ENCODE measurements at regions of chr20 and their contacts with region 1.

Region 1: GRCh38 chr20:50189681-50190582 is 698 bp upstream of the CEBPB start:
- DNase-seq: peak; percentile 90
- ATAC-seq: peak; percentile 53
- H3K4me3 ChIP-seq: peak overlapping the region; percentile 80 to 99 (median 95)
- H3K27ac ChIP-seq: peak overlapping the region; percentile 79
- H3K4me1 ChIP-seq: peaks cover 66% of the 10 kb centered on the region
- H3K27me3 ChIP-seq: no peaks in the 10 kb centered on the region; a peak in 1 of 5 replicates
- CTCF ChIP-seq: peak; percentile 96
- EP300 ChIP-seq: peak in 1 of 2 experiments; percentile 31; a peak in 1 of 4 replicates
- POLR2A ChIP-seq: no peak
- RAD21 ChIP-seq: peak; percentile 96

Region 2: GRCh38 chr20:50115591-50116372 is 74.2 kb before region 1 on chr20:
- CTCF ChIA-PET with region 1: no interaction called
- POLR2A ChIA-PET with region 1: interaction called, 35 read pairs
- in situ Hi-C with region 1: no loop called
- intact Hi-C with region 1: no loop called
- DNase-seq: peak; percentile 96
- ATAC-seq: peak; percentile 82
- H3K4me3 ChIP-seq: peak overlapping the region; percentile 65 to 94 (median 78)
- H3K27ac ChIP-seq: peak overlapping the region; percentile 40
- H3K4me1 ChIP-seq: peaks cover 56% of the 10 kb centered on the region
- H3K27me3 ChIP-seq: no peaks in the 10 kb centered on the region; a peak in 1 of 5 replicates
- CTCF ChIP-seq: 0 out of 2 replicates have a peak, but pooled peaks have one; percentile 2
- EP300 ChIP-seq: no peak; a peak in 1 of 4 replicates
- POLR2A ChIP-seq: peak; percentile 57 to 90; a peak in 3 of 4 replicates
- RAD21 ChIP-seq: 0 out of 2 replicates have a peak, but pooled peaks have one; percentile 32

Region 3: GRCh38 chr20:50242853-50243609 is 53.1 kb after region 1 on chr20:
- CTCF ChIA-PET with region 1: no interaction called
- POLR2A ChIA-PET with region 1: interaction called, 4 read pairs
- in situ Hi-C with region 1: no loop called
- intact Hi-C with region 1: loop called (anchors 10 kb)
- DNase-seq: peak; percentile 93
- ATAC-seq: peak; percentile 90
- H3K4me3 ChIP-seq: peak overlapping the region in 2 of 3 experiments; percentile 22 to 56; a peak in 2 of 6 replicates
- H3K27ac ChIP-seq: peak overlapping the region; percentile 28
- H3K4me1 ChIP-seq: peaks cover 100% of the 10 kb centered on the region
- H3K27me3 ChIP-seq: peaks cover 13 to 34% of the 10 kb centered on the region in 2 experiments; a peak in 4 of 5 replicates
- CTCF ChIP-seq: 0 out of 2 replicates have a peak, but pooled peaks have one; percentile 33
- EP300 ChIP-seq: peak; percentile 48 to 85; a peak in 3 of 4 replicates
- POLR2A ChIP-seq: 0 out of 4 replicates have a peak, but pooled peaks of 1 of the 2 experiments have one; percentile 34
- RAD21 ChIP-seq: peak; percentile 69

Region 4: DNA sequence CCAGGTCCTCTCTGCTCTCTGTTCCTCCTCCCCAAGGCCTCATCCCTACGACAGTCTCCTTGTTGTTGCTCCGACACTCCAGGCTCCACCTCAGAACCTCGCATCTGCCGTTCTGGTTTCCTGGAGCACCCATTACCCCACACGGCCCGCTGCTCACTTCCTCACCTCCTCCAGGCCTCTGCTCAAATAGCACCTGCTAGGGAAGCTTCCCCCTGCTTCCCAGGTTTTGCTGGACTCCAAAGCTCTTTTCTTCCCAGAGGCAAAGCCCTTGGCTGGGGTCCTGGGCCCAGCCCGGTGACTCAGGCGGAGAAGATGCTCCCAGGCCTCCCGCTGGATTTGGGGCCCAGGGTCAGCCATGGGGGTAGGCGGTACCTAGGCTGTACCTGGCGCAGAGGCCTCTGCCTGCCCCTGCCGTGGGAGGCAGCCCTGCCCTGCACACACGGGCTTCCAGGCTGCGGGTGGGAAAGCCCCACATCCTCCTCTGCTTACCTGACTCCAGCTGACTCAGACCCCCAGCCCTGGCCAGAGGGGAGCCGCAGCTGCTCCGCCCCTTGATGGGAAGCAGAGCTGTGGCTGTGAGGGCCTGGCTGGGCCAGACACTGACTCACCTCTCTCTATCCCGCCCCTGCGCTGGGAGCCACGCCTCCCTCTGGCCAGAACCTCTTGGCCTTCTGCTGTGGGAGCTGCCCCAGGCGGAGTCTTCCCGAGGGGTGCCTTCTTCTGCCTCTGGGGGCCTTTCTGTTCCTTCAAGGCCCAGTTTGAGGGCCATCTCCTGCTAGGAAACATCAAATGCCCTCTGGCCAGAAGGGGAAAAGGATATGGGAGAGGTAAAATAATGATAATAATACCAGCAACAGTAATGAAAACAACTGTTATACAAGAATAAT is 131.2 kb after region 1 on chr20:
- CTCF ChIA-PET with region 1: no interaction called
- POLR2A ChIA-PET with region 1: interaction called, 47 read pairs
- in situ Hi-C with region 1: no loop called
- intact Hi-C with region 1: no loop called
- DNase-seq: peak; percentile 85
- ATAC-seq: peak; percentile 95
- H3K4me3 ChIP-seq: peak overlapping the region; percentile 54 to 87 (median 62)
- H3K27ac ChIP-seq: peak overlapping the region; percentile 11
- H3K4me1 ChIP-seq: peaks cover 56% of the 10 kb centered on the region
- H3K27me3 ChIP-seq: no peaks in the 10 kb centered on the region; a peak in 2 of 5 replicates
- CTCF ChIP-seq: peak; percentile 59
- EP300 ChIP-seq: peak; percentile 18 to 47; a peak in 2 of 4 replicates
- POLR2A ChIP-seq: peak; percentile 16 to 86; a peak in 3 of 4 replicates
- RAD21 ChIP-seq: peak; percentile 49; the same call in 1 of the 2 replicates

Region 5: DNA sequence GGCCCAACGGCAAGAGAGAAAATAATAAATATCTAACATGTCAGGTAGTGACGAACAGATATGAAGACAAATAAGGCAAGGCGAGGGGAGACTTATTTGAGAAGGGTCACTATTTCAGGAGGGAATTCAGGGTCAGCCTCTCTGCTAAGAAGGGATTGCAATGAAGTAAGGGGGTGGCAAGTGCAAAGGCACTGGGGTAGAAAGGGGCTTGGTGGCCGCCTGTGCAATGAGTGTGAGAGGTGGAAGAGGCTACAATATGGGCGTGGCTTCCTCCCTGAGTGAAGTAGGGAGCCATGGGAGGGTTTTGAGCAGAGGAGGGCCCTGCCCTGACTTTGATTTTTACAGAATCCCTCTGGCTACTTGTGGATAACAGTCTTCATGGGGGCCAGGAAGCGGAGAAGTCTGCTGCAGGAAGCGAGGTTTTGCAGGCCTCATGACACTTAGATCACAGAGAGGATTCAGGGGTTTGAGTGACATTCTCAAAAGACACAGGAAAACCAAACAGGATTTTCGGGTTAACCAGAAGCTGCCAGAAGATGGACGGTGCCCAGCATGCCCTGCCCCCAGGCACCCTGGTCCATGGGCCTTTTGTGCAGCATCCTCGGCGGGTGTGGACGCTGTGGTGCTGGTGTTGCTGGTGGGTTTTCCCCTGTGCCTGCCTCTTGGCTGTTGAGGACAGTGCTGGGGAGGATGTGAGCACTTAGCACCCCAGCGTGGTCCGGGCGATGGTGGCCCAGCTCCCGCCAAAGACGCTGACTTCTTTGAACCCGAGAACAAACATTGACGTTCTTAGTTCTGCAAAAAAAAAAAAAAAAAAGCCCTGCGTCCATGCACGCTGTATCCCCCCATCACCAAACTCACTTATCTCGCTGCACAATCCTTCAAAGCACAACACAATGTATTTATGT is 196.1 kb after region 1 on chr20:
- CTCF ChIA-PET with region 1: interaction called, 13 read pairs
- POLR2A ChIA-PET with region 1: interaction called, 52 read pairs
- in situ Hi-C with region 1: loop called (anchors 5 kb)
- intact Hi-C with region 1: no loop called
- DNase-seq: no peak
- ATAC-seq: no peak
- H3K4me3 ChIP-seq: no peak overlapping the region
- H3K27ac ChIP-seq: peak overlapping the region; percentile 27
- H3K4me1 ChIP-seq: peaks cover 98% of the 10 kb centered on the region
- H3K27me3 ChIP-seq: no peaks in the 10 kb centered on the region
- CTCF ChIP-seq: no peak
- EP300 ChIP-seq: no peak
- POLR2A ChIP-seq: no peak
- RAD21 ChIP-seq: no peak

Region 6: GRCh38 chr20:50470264-50470858 is 280.4 kb after region 1 on chr20:
- CTCF ChIA-PET with region 1: interaction called, 138 read pairs
- POLR2A ChIA-PET with region 1: interaction called, 98 read pairs
- in situ Hi-C with region 1: no loop called
- intact Hi-C with region 1: no loop called
- DNase-seq: no peak
- ATAC-seq: peak; percentile 42
- H3K4me3 ChIP-seq: no peak overlapping the region
- H3K27ac ChIP-seq: no peak overlapping the region
- H3K4me1 ChIP-seq: peaks cover 53% of the 10 kb centered on the region
- H3K27me3 ChIP-seq: no peaks in the 10 kb centered on the region
- CTCF ChIP-seq: peak; percentile 18; the same call in 1 of the 2 replicates
- EP300 ChIP-seq: no peak
- POLR2A ChIP-seq: no peak
- RAD21 ChIP-seq: no peak

Measured in HepG2 (cell line).